Dorsolateral prefrontal cortex (tissue), 120 donors: ENCODE measurements at regions of chr7 and their contacts with region 1.

Region 1: DNA sequence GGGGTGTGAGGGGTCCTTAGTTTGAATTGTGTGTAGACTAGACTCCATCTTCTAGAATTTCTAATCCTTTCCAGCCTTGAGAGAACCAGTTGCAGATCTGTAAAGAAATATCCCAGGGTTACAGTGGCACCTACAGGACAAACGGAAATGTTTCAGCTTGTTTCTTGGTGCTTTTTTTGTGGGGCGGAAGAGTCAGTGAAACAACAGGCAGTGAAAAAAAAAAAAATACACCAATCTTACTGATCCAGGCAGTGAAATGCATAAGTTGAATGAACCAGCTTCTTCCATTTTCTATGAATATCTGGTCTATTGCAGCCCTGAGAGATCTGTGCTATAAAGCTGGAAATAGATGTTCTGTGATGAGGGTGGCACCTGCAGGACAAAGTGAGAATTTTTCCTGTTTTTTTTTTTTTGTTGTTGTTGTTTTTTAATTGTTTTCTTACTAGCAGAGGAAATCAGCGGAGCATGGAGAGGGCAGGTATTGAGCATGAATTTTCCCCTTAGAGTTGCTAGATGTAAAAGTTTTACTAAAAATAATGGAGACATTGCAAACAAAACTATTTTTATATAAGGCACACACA is 81.9 kb upstream of the DYNC1I1 start:
- DNase-seq: no peak
- H3K4me3 ChIP-seq: peak overlapping the region in 35 of 59 donors; percentile 6 to 57 (median 32)
- H3K27ac ChIP-seq: peak overlapping the region in 42 of 59 donors; percentile 1 to 89 (median 51)
- H3K27me3 ChIP-seq: peaks cover 0 to 3% (median 0%) of the 10 kb centered on the region in 45 donors
- CTCF ChIP-seq: peak; percentile 51 to 87 (median 77)

Region 2: GRCh38 chr7:94289071-94289470 is 1401.4 kb before region 1 on chr7:
- intact Hi-C with region 1: loop called in 1 of 2 experiments (anchors 5 kb)
- DNase-seq: peak in 8 of 10 donors; percentile 8 to 63 (median 46)
- H3K4me3 ChIP-seq: no peak overlapping the region
- H3K27ac ChIP-seq: no peak overlapping the region
- H3K27me3 ChIP-seq: peaks cover 0 to 14% (median 0%) of the 10 kb centered on the region in 45 donors
- CTCF ChIP-seq: peak; percentile 20 to 86 (median 68)

Region 3: DNA sequence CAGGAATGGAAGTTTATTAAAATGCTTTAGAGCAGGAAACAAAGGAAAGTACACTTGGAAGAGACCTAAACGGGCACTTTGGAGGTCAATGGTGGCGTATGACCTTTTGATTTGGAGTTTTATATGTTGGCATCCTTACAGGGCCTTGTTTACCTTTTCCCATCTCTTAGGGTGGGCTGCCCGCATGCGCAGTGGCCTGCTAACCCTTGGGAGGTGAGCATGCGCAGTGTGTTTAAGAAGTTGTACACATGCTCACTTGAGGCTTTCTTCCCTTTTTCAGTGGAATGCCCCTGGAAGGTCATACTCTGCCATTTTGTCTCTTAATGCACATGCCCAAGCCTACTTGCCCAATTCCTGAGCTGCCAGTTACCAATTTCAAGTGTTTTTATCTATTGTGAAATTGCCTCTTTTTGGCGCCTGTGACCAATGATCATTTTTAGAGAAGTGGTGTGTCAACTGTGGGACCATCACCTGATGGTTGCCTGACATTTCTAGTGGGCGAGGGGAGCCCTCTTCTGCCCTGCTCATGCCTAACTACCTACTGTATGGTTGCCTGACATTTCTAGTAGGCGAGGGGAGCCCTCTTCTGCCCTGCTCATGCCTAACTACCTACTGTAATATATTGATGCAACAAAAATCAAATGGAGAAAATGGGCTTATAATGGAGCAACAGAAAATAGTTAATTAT is 645.1 kb before region 1 on chr7:
- intact Hi-C with region 1: loop called in 1 of 2 experiments (anchors 10 kb)
- DNase-seq: peak in 7 of 10 donors; percentile 25 to 80 (median 58)
- H3K4me3 ChIP-seq: no peak overlapping the region
- H3K27ac ChIP-seq: peak overlapping the region in 22 of 59 donors; percentile 22 to 96 (median 90)
- H3K27me3 ChIP-seq: no peaks in the 10 kb centered on the region
- CTCF ChIP-seq: peak in 52 of 56 donors; percentile 17 to 73 (median 45)

Region 4: DNA sequence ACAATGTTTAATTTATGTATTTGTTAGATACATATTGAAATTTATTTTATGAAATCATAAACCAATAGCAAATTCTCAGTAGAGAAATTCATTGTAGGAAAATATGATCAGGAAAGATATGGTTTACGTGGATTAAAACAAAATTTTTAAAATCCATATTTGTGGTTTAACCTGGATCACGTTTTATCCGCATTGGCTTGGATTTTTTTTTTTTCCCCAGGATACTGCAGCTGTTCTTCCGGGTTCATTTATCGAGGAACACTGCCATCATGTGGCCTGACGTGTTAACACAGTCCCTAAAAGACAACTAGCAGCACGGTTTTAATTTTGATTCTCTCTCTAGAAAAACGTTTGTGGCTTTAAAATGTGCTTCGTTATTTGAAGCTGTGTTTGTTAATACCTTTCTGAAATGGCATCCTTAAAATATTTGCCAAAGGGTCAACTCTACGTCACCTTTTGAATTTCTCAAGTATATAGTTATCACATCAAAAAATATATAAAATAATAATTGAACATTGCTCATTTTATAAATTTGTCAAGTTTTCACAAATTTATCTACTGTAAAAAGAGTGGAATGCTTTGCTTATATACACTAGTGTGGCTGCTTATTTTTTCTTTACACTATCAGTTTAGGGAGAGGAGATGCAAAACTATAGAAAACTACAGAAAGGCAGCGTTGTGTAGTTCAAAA is 213.4 kb before region 1 on chr7:
- intact Hi-C with region 1: loop called in 1 of 2 experiments (anchors 2 kb)
- DNase-seq: peak in 9 of 10 donors; percentile 23 to 86 (median 58)
- H3K4me3 ChIP-seq: peak overlapping the region in 22 of 59 donors; percentile 1 to 61 (median 16)
- H3K27ac ChIP-seq: peak overlapping the region in 4 of 59 donors; percentile 3 to 21 (median 20)
- H3K27me3 ChIP-seq: no peaks in the 10 kb centered on the region
- CTCF ChIP-seq: peak; percentile 77 to 99 (median 90)

Region 5: GRCh38 chr7:95545078-95545498 is 145.4 kb before region 1 on chr7:
- intact Hi-C with region 1: loop called in 1 of 2 experiments (anchors 5 kb)
- DNase-seq: peak in 3 of 10 donors; percentile 40 to 61 (median 60)
- H3K4me3 ChIP-seq: peak overlapping the region in 58 of 59 donors; percentile 3 to 67 (median 46)
- H3K27ac ChIP-seq: peak overlapping the region; percentile 70 to 100 (median 93)
- H3K27me3 ChIP-seq: no peaks in the 10 kb centered on the region
- CTCF ChIP-seq: peak; percentile 38 to 92 (median 76)